PC-3 (cell line): ENCODE measurements at regions of chr4 and their contacts with region 1.

Region 1: GRCh38 chr4:82629238-82630000 is 67.6 kb upstream of the TMEM150C start:
- DNase-seq: no peak
- ATAC-seq: no peak
- H3K4me3 ChIP-seq: no peak overlapping the region
- H3K27ac ChIP-seq: no peak overlapping the region
- H3K4me1 ChIP-seq: no peaks in the 10 kb centered on the region
- H3K27me3 ChIP-seq: no peaks in the 10 kb centered on the region
- CTCF ChIP-seq: no peak

Region 2: DNA sequence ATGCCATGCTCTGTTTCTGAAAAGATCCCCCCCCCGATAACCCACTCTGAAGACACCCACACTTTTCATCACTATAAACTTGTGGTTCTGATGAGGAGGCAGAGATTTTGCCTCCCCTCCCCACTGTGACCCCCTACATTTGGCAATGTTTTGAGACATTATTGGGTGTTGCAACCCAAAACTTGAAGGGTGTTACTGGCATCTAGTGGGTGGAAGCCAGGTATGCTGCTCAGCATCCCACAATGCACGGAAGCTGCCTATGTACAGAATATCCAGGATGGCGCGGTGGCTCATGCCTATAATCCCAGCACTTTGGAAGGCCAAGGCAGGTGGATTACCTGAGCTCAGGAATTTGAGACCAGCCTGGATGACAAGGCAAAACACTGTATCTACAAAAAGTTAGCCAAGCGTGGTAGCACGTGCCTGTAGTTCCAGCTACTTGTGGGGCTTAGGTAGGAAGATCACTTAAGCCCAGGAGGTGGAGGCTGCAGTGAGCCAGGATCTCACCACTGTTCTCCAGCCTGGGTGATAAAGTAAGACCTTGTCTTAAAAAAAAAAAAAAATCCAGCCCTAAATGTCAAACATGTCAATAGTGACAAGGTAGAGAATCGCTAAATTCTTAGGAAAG is 81.9 kb after region 1 on chr4:
- CTCF ChIA-PET with region 1: no interaction called
- POLR2A ChIA-PET with region 1: interaction called, 15 read pairs
- intact Hi-C with region 1: no loop called
- DNase-seq: no peak
- ATAC-seq: no peak
- H3K4me3 ChIP-seq: no peak overlapping the region
- H3K27ac ChIP-seq: no peak overlapping the region
- H3K4me1 ChIP-seq: no peaks in the 10 kb centered on the region
- H3K27me3 ChIP-seq: no peaks in the 10 kb centered on the region
- CTCF ChIP-seq: no peak